PC-9 (cell line): ENCODE measurements at regions of chr3 and their contacts with region 1.

Region 1: DNA sequence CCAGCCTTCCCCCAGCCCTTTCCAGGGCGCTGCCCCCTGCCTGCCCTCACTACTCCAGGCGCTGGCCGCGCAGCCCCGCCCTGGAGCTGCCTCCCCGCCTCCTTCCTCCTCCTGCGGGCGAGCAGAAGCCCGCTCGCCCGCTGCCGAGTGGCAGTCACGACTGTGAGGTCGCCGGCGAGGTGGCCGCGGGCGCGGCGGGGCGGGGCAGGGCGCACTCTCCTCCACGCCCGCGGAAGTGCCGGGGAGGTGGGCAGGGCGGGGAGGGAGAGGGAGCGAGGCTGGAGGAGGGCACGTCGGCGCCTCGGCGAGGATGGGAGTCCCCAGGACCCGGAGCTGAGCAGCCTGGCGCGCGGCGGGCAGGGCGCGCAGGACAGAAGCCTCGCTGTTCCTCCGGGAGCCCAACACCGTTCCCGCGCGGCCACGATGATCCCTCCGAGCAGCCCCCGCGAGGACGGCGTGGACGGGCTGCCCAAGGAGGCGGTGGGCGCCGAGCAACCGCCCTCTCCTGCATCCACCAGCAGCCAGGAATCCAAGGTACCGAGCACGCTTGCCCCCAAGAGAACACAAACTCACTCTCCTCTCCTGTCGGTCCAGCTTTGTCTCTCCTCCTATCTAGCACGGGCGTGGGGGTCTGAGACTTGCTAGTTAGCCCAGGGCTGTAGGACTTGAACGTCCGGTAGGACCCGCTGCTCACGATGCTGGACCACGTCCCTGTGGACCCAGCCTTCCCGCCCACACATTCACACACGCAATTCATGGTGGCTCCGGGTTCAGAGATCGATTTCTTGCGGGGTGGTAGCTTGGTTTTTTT is at the start of gene STAC:
- DNase-seq: peak; percentile 60 to 85
- H3K4me3 ChIP-seq: peak within 1 kb of the TSS; percentile 96
- H3K27ac ChIP-seq: no peak within 1 kb of the TSS
- H3K4me1 ChIP-seq: peaks cover 23% of the 10 kb centered on the region
- H3K27me3 ChIP-seq: no peaks in the 10 kb centered on the region
- CTCF ChIP-seq: no peak
- total RNA-seq, gene STAC: 14.7 and 17.6 TPM in 2 replicates

Region 2: GRCh38 chr3:36149447-36149865 is 231.0 kb before region 1 on chr3:
- CTCF ChIA-PET with region 1: no interaction called
- POLR2A ChIA-PET with region 1: interaction called, 3 read pairs
- intact Hi-C with region 1: loop called (anchors 5 kb)
- DNase-seq: peak; percentile 46 to 80
- H3K4me3 ChIP-seq: no peak overlapping the region
- H3K27ac ChIP-seq: peak overlapping the region; percentile 41
- H3K4me1 ChIP-seq: peaks cover 21% of the 10 kb centered on the region
- H3K27me3 ChIP-seq: no peaks in the 10 kb centered on the region
- CTCF ChIP-seq: no peak

Region 3: DNA sequence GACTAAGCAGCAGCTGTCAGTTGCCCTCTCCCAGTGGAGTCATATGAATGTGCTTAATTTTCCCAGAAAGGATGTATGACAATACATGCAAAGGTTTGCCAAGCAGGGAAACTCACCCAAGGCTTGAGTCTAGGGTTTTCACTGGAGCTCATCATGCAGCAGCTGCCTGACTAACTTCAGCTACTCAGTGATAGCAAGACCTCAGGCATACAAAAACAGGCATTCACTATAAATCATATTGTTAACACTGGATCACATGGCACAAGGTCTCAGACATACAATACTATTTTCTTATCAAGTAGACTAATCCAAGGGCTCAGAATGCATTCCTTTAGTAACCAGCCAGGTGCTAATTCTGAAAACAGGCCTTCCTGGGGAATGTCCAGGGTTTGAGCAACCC is 85.1 kb before region 1 on chr3:
- CTCF ChIA-PET with region 1: no interaction called
- POLR2A ChIA-PET with region 1: no interaction called
- intact Hi-C with region 1: loop called (anchors 5 kb)
- DNase-seq: no peak
- H3K4me3 ChIP-seq: no peak overlapping the region
- H3K27ac ChIP-seq: no peak overlapping the region
- H3K4me1 ChIP-seq: peaks cover 30% of the 10 kb centered on the region
- H3K27me3 ChIP-seq: no peaks in the 10 kb centered on the region
- CTCF ChIP-seq: no peak

Region 4: DNA sequence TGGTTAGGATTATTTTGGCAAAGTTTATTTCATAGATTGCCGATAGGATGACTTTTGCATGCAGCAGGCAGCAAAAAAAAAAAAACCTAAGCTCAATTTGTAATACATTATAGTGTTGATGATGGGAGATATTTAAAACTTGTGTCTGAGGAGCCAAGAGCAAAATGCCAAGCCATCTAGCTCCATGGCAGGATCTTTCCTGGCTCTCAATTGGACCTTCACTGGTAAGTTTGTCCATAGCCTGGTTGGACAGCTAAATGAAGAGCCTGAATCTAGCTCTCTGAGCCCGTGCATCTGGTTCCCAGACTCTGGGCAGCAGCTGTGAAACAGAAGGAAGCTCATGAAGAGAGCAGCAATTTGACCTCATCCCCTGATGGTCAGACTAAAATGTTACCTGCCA is 17.4 kb after region 1 on chr3:
- CTCF ChIA-PET with region 1: no interaction called
- POLR2A ChIA-PET with region 1: no interaction called
- intact Hi-C with region 1: no loop called
- DNase-seq: no peak
- H3K4me3 ChIP-seq: no peak overlapping the region
- H3K27ac ChIP-seq: no peak overlapping the region
- H3K4me1 ChIP-seq: no peaks in the 10 kb centered on the region
- H3K27me3 ChIP-seq: no peaks in the 10 kb centered on the region
- CTCF ChIP-seq: no peak

Region 5: DNA sequence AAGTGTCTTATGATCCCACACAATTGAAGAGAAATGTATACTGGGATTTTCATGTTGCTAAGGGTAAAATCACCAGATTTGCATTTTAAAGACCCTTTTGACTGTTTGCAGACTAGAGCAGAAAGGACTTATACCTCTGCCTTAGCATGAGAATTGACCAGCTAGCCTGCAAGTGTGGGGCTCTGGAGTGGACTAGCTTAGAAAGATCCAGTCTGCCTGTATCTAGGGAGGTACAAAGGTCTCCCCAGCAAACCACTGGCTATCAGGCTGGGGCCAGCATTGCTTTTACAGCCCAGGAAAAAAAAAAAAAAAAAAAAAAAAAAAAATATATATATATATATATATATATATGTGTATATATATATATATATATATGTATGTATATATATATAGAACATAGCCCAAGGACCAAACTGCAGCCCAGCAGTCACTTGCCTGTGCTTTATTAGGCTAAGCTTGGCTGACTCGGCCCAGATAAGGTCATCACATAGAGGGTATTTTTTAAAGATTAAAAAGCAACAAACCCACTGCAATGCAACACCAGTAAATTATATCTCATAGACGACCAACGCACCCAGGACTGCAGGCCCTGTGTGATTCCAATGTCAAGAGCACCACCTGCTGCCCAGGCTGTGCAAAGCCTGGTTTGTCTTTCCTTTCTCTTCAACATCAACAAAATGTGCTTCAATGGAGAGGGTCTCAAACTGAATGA is 320.3 kb after region 1 on chr3:
- CTCF ChIA-PET with region 1: no interaction called
- POLR2A ChIA-PET with region 1: no interaction called
- intact Hi-C with region 1: loop called (anchors 10 kb)
- DNase-seq: peak; percentile 51 to 55
- H3K4me3 ChIP-seq: no peak overlapping the region
- H3K27ac ChIP-seq: no peak overlapping the region
- H3K4me1 ChIP-seq: peaks cover 18% of the 10 kb centered on the region
- H3K27me3 ChIP-seq: no peaks in the 10 kb centered on the region
- CTCF ChIP-seq: peak; percentile 91